PC-3 (cell line): ENCODE measurements at regions of chr1 and their contacts with region 1.

Region 1: DNA sequence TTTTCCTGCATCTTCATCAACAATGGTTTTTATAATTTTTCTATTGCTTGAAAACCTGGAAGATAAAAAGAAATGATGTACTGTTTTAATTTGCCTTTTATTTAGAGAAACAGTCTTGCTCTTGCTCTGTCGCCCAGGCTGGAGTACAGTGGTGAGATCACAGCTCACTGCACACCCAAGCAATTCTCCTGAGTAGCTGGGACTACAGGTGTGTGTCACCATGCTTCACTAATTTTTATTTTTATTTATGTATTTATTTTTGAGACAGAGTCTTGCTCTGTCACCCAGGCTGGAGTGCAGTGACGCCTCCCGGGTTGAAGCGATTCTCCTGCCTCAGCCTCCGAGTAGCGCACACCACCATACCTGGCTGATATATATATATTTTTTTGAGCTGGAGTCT is 43.0 kb upstream of the RPL11 start:
- DNase-seq: no peak
- ATAC-seq: no peak
- H3K4me3 ChIP-seq: no peak overlapping the region
- H3K27ac ChIP-seq: no peak overlapping the region
- H3K4me1 ChIP-seq: no peaks in the 10 kb centered on the region
- H3K27me3 ChIP-seq: no peaks in the 10 kb centered on the region
- CTCF ChIP-seq: no peak

Region 2: DNA sequence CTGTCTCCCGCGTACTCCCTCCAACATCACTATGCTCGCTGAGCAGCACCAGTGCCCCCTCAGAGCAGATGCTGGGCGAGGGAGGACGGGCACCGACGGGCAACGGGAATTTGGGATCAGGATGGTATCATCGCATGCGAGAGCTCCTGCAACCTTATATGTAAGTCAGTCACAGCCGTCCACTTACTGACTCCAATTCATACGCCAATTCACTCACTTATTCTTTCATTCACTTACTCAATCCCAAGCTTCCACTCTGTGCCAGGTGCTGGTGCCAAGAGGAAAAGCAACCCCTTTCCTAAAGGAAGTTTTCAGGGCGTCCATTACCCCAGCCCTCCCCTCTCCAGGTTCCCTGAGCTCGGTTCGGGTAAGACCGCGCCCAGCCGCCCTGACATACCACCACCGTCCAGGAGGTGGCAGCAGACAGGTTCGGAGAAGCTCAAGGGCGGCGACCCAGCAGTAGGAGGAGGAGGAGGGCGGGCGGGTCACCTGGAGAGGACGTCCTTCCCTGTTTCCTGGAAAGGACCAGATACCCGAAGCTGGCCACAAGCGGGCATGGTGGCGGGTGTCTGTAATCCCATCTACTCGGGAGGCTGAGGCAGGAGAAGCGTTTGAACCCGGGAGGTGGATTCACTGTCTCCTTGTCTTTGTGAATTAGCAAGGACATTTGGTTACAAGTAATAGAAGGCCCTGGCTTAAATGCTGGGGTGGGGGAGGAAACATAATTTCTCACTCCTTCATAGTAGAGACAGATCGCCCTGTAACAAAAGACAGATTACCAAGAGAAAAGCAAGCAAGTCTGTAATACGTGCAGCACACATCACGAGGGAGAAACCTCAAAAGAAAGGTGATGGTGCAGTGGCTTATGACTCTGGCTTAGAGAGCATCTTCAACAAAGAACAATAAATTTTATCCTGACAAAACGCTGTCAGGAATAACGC is 501.9 kb after region 1 on chr1:
- CTCF ChIA-PET with region 1: no interaction called
- POLR2A ChIA-PET with region 1: interaction called, 15 read pairs
- intact Hi-C with region 1: no loop called
- DNase-seq: peak; percentile 95
- ATAC-seq: peak; percentile 92
- H3K4me3 ChIP-seq: peak overlapping the region; percentile 68
- H3K27ac ChIP-seq: peak overlapping the region; percentile 77
- H3K4me1 ChIP-seq: peaks cover 23% of the 10 kb centered on the region
- H3K27me3 ChIP-seq: no peaks in the 10 kb centered on the region
- CTCF ChIP-seq: peak; percentile 79

Region 3: DNA sequence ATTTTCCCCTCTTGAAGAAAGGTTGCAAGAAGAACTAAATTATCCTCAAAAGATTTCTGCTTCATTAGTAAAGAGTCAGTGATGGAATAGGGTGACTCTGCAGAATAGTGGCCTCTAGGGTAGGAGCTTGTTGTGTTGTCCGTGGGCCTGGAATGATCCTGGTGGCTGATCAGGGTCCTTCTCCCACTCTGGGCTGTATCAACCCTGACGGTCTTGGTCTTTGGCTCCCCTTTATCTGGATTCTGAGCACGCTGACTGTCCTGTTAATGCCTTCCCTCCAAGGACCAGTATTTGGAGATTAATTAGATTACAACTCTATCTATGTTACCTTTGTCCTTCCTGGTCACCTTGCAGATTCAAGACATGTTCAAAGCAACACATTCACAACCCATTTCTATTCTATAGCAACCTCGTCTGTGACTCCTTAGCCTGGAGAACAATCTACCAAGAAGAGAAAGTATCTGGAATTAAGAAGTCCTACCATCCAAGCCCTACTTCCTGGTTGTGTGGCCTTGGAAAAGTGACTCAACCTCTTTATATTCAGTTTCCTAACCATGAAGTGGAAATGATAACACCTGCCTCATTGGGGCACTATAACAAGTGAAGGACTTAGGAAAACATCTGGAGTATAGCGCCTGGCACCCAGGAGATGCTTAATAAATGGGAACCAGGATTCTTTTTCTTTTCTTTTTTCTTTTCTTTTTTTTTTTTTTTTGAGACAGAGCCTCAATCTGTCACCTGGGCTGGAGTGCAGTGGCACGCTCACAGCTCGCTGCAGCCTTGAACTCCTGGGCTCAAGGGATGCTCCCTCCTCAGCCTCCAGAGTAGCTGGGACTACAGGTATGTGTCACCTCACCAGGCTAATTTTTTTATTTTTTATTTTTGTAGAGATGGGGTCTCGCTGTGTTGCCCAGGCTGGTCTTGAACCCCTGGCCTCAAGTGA is 958.0 kb after region 1 on chr1:
- CTCF ChIA-PET with region 1: no interaction called
- POLR2A ChIA-PET with region 1: no interaction called
- intact Hi-C with region 1: no loop called
- DNase-seq: peak; percentile 15
- ATAC-seq: no peak
- H3K4me3 ChIP-seq: no peak overlapping the region
- H3K27ac ChIP-seq: no peak overlapping the region
- H3K4me1 ChIP-seq: peaks cover 8% of the 10 kb centered on the region
- H3K27me3 ChIP-seq: no peaks in the 10 kb centered on the region
- CTCF ChIP-seq: no peak